ENCODE measurements at regions of chr16 and their contacts with region 1.

Region 1: GRCh38 chr16:88442727-88443576 is 10.1 kb upstream of the ZFPM1 start:
- DNase-seq: peak; percentile 47 to 54
- ATAC-seq: peak; percentile 73 to 87
- H3K4me3 ChIP-seq: no peak overlapping the region
- H3K27ac ChIP-seq: no peak overlapping the region
- H3K4me1 ChIP-seq: no peaks in the 10 kb centered on the region
- H3K27me3 ChIP-seq: no peaks in the 10 kb centered on the region
- CTCF ChIP-seq: peak; percentile 93 to 98 (median 96)
- POLR2A ChIP-seq: no peak

Region 2: GRCh38 chr16:88347656-88348376 is 95.1 kb before region 1 on chr16:
- in situ Hi-C with region 1: no loop called
- intact Hi-C with region 1: no loop called
- DNase-seq: no peak
- ATAC-seq: no peak
- H3K4me3 ChIP-seq: no peak overlapping the region
- H3K27ac ChIP-seq: no peak overlapping the region
- H3K4me1 ChIP-seq: no peaks in the 10 kb centered on the region
- H3K27me3 ChIP-seq: no peaks in the 10 kb centered on the region
- CTCF ChIP-seq: no peak
- POLR2A ChIP-seq: no peak

Region 3: DNA sequence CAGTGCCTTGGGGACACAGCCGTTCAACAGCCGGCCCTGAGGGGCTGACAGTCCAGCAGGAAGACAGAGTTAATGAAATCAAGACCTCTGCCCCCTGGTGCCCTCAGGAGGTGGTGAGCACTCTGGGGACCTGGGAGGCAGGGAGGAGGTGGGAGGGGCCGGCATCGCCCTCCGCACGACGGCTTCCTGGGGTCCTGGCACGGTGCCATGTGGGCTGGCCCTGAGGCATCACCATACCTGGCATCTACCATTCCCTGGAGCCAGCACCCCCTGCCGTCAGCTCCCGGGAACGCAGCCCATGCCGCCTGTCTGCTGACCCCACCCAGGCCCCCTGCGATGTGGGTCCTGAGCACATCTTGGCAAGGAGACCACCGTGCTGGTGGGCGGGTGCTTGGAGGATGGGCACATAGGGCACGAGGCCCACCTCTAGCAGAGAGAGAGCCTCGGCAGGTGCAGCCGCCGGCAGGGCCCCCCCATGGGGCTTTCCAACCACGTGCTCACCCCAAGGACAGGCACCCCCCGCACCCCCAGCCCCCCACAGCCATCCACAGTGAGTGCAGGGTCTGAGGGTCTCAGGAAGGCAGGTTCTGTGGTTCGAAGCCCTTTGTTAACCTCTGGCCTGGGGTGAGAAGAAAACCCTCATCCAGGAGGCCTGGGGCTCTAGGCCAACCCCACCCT is 62.6 kb after region 1 on chr16:
- in situ Hi-C with region 1: no loop called
- intact Hi-C with region 1: loop called (anchors 1 kb)
- DNase-seq: peak in 1 of 2 donors; percentile 25
- ATAC-seq: no peak
- H3K4me3 ChIP-seq: no peak overlapping the region
- H3K27ac ChIP-seq: no peak overlapping the region
- H3K4me1 ChIP-seq: no peaks in the 10 kb centered on the region
- H3K27me3 ChIP-seq: peaks cover 0 to 1% (median 0%) of the 10 kb centered on the region in 3 donors
- CTCF ChIP-seq: peak in 4 of 5 experiments; percentile 15 to 49 (median 34)
- POLR2A ChIP-seq: no peak

Region 4: DNA sequence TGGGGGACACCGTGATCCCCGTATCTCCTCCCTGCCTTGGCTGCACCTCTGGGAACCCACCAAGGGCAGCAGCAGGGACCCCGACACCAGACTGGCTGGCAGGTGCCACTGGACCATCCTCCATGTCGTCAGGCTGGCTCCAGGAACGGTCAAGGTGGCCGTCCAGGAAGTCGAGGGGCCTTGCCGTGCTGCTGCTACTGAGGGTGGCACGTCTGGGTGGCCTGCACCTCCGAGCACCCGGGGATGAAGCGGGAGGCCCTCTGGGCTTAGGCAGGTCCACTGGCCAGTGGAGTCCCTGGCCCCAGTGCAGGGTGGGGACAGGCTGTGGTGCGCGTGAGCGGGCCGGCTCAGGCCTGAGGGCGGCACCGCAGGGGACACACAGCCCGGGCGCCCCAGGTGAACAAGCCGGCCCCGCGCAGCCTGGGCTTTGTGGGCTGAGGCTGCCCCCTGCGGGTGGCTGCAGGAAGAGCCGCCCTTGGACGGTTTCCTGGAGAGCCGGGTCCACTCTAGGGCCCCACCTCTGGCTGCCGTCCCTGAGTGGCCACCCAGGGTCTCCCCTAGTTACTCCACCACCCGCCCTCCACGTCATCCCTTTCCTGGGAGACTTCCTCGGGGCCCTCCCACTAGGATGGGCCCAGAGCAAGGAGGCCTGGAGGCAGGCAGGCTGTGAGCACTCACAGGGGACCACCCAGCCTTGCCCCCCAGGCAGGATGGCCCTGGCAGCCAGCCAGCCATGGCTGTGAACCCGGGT is 84.4 kb after region 1 on chr16:
- in situ Hi-C with region 1: no loop called
- intact Hi-C with region 1: loop called (anchors 1 kb)
- DNase-seq: no peak
- ATAC-seq: peak; percentile 42
- H3K4me3 ChIP-seq: no peak overlapping the region
- H3K27ac ChIP-seq: no peak overlapping the region
- H3K4me1 ChIP-seq: peaks cover 12 to 37% of the 10 kb centered on the region in 2 donors
- H3K27me3 ChIP-seq: peaks cover 20 to 26% (median 22%) of the 10 kb centered on the region in 3 donors
- CTCF ChIP-seq: peak; percentile 56 to 92 (median 81)
- POLR2A ChIP-seq: no peak

Region 5: GRCh38 chr16:88561485-88562369 is 118.8 kb after region 1 on chr16:
- in situ Hi-C with region 1: loop called in 1 of 4 experiments (anchors 25 kb)
- intact Hi-C with region 1: loop called (anchors 1 kb)
- DNase-seq: no peak
- ATAC-seq: peak in 1 of 2 donors; percentile 38
- H3K4me3 ChIP-seq: peak overlapping the region in 3 of 4 donors; percentile 13 to 20 (median 18)
- H3K27ac ChIP-seq: no peak overlapping the region
- H3K4me1 ChIP-seq: peaks cover 6 to 8% of the 10 kb centered on the region in 2 donors
- H3K27me3 ChIP-seq: peaks cover under 1 to 12% (median 6%) of the 10 kb centered on the region in 3 donors
- CTCF ChIP-seq: peak; percentile 17 to 64 (median 50)
- POLR2A ChIP-seq: no peak

Measured in gastrocnemius medialis (tissue), 4 donors.